PC-3 (cell line): ENCODE measurements at regions of chr5 and their contacts with region 1.

Region 1: GRCh38 chr5:923281-923873 is 30.7 kb downstream of the TRIP13 start:
- DNase-seq: peak; percentile 72
- ATAC-seq: peak; percentile 95
- H3K4me3 ChIP-seq: no peak overlapping the region
- H3K27ac ChIP-seq: no peak overlapping the region
- H3K4me1 ChIP-seq: no peaks in the 10 kb centered on the region
- H3K27me3 ChIP-seq: no peaks in the 10 kb centered on the region
- CTCF ChIP-seq: peak; percentile 85

Region 2: DNA sequence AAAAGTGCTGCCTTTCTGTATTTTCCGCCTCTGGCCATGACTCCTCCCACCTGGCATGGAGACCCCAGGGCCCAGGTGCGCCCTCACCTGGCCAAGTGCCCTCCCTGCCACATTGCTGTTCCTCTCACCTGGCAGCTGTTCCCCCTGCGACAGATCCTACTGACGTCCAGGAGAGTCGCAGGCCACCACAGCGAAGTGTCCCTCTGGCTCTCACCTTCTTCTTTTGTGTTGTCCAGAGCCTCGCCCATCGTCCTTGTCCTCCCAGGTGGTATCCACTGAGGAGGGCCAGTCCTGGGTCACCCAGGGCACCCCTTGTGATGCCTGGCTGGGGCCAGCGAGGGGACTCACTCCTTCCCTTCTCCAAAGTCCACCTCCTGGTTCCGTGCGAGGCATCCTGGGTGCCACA is 87.9 kb after region 1 on chr5:
- CTCF ChIA-PET with region 1: no interaction called
- POLR2A ChIA-PET with region 1: no interaction called
- intact Hi-C with region 1: loop called (anchors 5 kb)
- DNase-seq: peak; percentile 63
- ATAC-seq: no peak
- H3K4me3 ChIP-seq: no peak overlapping the region
- H3K27ac ChIP-seq: no peak overlapping the region
- H3K4me1 ChIP-seq: no peaks in the 10 kb centered on the region; the same call in 1 of the 2 replicates
- H3K27me3 ChIP-seq: no peaks in the 10 kb centered on the region
- CTCF ChIP-seq: peak; percentile 67